ENCODE measurements at regions of chr19 and their contacts with region 1.

Region 1: GRCh38 chr19:52570000-52570861 is at the start of gene ZNF701:
- DNase-seq: peak; percentile 89 to 99 (median 96)

Region 2: GRCh38 chr19:52492597-52493470 is 77.4 kb before region 1 on chr19:
- intact Hi-C with region 1: no loop called
- DNase-seq: no peak

Region 3: GRCh38 chr19:52527134-52527955 is 42.9 kb before region 1 on chr19 and contains the start of gene ZNF808:
- intact Hi-C with region 1: loop called (anchors 1 kb)
- DNase-seq: peak; percentile 77 to 97 (median 90)

Measured in posterior cingulate gyrus (tissue), 11 donors.